ENCODE measurements at regions of chr4 and their contacts with region 1.

Region 1: GRCh38 chr4:1167247-1167949 is 5.0 kb downstream of the SPON2 start:
- DNase-seq: peak; percentile 88 to 92
- ATAC-seq: peak; percentile 83

Region 2: DNA sequence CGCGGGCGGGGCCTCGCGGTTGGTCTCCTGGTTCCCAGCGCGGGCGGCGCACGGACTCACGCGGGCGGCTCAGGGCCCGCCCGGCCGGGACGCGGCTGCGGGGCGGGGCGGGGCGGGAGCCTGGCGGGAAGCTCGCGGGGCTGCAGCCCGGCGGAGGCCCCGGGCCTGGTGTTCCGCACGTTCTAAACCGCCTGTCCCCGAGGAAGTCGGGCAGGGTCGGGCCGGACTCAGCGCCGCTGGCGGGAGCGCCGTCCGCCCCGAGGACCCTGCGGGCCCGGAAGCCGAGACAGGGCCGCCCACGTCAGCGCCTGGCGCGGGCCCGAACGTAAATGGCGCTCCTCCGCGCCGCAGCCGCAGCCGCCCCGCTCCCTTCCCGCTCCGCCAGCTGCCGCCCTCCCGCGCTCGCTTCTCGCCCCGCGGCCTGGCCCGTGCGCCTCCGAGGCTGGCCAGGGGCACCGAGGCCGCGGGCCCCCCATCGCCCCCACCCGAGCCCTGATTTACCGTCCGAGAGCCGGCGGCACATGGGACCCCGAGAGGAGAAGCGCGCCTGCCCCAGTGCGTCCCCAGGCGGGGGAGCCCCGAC is 81.8 kb after region 1 on chr4:
- intact Hi-C with region 1: loop called (anchors 10 kb)
- DNase-seq: peak; percentile 79 to 89
- ATAC-seq: peak; percentile 72

Measured in left colon (tissue), 2 donors.